ENCODE measurements at regions of chr12 and their contacts with region 1.

Region 1: GRCh38 chr12:4037747-4038312 is 164.6 kb upstream of the PARP11 start:
- DNase-seq: peak; percentile 58 to 62
- H3K4me3 ChIP-seq: no peak overlapping the region
- H3K27ac ChIP-seq: no peak overlapping the region
- H3K4me1 ChIP-seq: peaks cover 0 to 5% of the 10 kb centered on the region in 2 donors
- H3K27me3 ChIP-seq: no peaks in the 10 kb centered on the region
- CTCF ChIP-seq: peak; percentile 52 to 89 (median 73)
- POLR2A ChIP-seq: no peak

Region 2: DNA sequence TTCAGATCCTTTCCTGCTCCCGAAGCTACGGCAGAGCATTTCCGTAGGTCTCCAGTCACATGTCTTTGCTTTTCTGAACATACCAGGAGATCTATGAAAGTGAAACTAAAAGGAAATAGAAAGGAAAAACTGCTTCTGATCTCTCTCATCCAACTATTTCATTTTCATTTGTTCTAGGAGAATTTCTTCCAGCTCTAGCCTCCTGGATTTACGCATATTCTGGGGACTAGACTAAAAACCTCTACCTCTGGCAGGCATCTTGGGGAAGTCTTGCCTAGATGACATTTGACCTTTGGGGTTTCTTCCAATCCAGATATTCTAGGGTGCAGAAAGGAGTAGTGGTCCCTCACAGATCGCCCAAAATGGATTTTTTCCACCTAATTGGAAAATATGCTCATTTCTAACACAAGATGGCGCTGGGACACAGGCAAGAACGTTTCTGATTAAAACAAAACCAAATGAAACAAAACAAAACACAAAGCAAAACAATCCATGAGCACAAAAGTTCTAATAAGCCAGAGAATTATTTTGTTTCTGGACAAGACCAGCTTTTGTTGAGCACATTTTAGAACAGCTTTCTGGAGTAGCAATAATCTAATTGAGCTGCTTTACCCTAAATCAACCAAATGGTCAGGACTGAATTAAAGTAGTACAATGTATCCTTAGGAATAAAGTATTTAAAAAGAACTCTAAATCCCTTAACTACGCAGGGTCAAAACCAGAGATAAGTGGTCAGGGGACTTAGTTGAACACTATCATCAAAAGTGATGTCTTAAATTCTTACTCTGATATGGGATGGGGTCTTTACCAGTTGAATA is 152.3 kb before region 1 on chr12:
- intact Hi-C with region 1: loop called (anchors 2 kb)
- DNase-seq: peak in 1 of 2 donors; percentile 28
- H3K4me3 ChIP-seq: peak overlapping the region in 1 of 3 donors; percentile 1
- H3K27ac ChIP-seq: peak overlapping the region in 2 of 3 donors; percentile 44 to 71
- H3K4me1 ChIP-seq: no peaks in the 10 kb centered on the region
- H3K27me3 ChIP-seq: no peaks in the 10 kb centered on the region
- CTCF ChIP-seq: peak in 5 of 6 experiments; percentile 69 to 92 (median 85)
- POLR2A ChIP-seq: no peak

Region 3: GRCh38 chr12:4379405-4379804 is 341.6 kb after region 1 on chr12 and contains the start of gene FGF23:
- intact Hi-C with region 1: no loop called
- DNase-seq: peak in 1 of 2 donors; percentile 11
- H3K4me3 ChIP-seq: no peak within 1 kb of the TSS
- H3K27ac ChIP-seq: no peak within 1 kb of the TSS
- H3K4me1 ChIP-seq: no peaks in the 10 kb centered on the region
- H3K27me3 ChIP-seq: no peaks in the 10 kb centered on the region
- CTCF ChIP-seq: no peak
- POLR2A ChIP-seq: no peak
- total RNA-seq, gene FGF23: not detected

Measured in thyroid gland (tissue), 4 donors.